Aorta (tissue), 5 donors: ENCODE measurements at regions of chr22 and their contacts with region 1.

Region 1: DNA sequence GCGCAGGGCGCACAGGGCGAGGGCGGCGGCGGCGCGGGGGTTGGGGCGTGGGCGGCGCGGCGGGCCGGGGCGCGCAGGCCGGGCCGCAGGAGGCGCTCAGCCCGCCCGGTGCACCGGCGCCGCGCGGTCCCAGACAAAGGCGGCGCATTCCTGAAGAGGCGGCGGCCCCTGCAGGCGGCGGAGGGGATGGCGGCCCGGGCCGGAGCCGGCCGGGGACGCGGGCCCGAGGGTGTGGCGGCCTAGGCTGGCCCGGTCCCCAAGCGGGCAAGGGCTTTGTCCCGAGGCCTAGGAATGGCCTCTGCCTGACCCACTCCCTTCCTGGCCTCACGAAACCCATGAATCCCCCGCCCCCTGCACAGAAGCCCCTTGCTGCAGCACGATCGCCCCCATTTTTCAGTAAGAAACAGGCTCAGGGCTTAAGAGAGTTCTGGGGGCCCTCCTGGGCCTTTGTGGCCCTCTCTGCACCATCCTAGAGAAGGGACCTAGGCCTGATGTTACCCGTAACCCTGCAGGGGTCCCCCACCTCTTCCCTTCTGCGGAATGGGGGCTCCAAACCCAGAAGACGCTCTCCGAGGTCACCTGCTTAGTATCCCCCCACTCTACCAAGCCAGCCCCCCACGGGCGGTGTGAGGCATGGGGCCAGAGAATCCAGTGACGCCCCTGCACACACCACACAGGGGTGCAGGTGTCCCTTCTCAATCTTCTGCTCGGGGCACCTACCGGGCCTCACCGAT is at the start of gene RTN4R:
- DNase-seq: peak; percentile 64 to 89
- ATAC-seq: peak; percentile 79
- H3K4me3 ChIP-seq: peak within 1 kb of the TSS; percentile 31 to 34
- H3K27ac ChIP-seq: no peak within 1 kb of the TSS
- H3K4me1 ChIP-seq: no peaks in the 10 kb centered on the region
- H3K27me3 ChIP-seq: no peaks in the 10 kb centered on the region
- total RNA-seq, gene RTN4R: 1.3 to 2.7 TPM

Region 2: DNA sequence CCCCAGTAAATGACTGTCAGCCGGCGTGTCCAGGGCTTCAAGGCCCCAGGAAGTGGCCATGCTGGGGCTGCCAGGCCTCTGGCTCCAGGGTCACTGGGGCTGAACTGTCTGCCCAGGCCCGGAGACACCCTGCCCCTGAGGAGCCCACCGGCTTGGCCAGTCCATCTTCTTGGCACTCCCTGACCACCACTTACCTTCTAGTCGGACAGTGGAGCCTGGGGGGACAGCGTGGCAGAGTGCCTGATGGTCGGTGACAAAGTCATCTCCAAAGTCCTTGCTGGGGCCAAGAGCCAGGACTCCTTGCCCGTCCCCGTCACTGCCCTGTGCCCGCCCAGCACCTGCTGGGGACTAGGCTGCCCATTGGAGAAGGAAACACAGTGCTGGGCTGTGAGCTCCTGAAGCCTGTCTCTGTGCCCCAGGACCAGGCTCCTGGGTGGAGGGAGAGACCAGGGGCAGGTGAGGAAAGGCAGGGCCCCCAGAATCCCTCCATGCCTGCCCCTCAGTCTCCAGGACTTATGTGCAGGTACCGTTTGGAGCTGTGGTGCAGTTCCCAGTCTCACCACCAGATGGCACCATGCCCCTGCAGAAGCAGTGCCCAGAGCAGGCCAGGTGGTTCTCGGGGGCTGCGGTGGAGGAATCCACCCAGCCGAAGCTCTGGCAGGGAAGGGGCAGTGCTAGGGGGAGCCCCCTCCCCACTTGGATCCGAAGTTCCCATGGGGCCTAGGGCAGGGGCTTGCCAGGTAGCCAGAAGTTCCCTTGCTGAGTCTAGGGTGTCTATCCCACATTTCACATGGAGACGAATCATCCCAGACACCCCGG is 111.6 kb before region 1 on chr22:
- intact Hi-C with region 1: loop called (anchors 2 to 5 kb)
- DNase-seq: peak; percentile 89 to 95
- ATAC-seq: peak; percentile 89
- H3K4me3 ChIP-seq: no peak overlapping the region
- H3K27ac ChIP-seq: no peak overlapping the region
- H3K4me1 ChIP-seq: no peaks in the 10 kb centered on the region
- H3K27me3 ChIP-seq: no peaks in the 10 kb centered on the region

Region 3: DNA sequence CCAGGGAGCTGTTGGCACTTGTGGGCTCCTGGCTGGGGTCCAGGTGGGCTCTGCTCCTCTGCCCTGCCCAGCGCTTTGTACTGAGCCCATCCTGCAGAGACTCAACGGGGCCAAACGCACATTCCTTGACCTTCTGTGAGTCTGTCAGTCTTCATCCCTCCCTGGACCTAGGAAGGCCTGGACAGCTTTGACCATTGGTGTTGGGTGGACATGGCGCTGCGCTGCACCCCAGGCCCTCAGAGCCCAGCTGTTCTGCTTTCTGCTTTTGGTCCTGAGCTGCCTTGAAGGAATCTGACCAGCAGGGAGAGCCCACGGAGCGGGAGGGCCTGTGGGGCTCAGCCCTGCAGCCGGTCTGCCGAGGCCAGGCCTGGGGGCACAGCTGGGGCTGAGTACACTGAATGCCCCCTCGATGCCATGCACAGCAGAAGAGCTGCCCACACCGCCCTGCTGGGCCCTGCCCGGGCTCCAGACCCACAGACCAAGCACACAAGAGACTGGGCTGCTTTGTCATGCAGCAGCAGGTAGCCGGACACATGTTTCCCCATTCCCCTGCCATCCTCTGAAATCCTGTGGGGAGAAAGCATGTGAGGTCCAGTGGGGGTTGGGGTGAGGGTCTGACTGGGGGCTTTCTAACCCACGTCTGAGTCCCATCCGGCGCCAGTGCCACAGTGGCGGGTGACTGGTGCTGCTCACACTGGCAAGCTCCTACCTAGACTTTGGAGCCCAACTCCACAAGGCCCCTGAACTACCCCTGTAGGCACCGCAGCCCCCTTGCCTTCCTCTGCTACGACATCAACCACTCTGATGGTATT is 93.5 kb before region 1 on chr22:
- intact Hi-C with region 1: loop called in 1 of 2 experiments (anchors 5 kb)
- DNase-seq: no peak
- ATAC-seq: no peak
- H3K4me3 ChIP-seq: no peak overlapping the region
- H3K27ac ChIP-seq: no peak overlapping the region
- H3K4me1 ChIP-seq: no peaks in the 10 kb centered on the region
- H3K27me3 ChIP-seq: no peaks in the 10 kb centered on the region

Region 4: GRCh38 chr22:20254975-20255946 is 13.2 kb before region 1 on chr22:
- intact Hi-C with region 1: no loop called
- DNase-seq: no peak
- ATAC-seq: no peak
- H3K4me3 ChIP-seq: no peak overlapping the region
- H3K27ac ChIP-seq: no peak overlapping the region
- H3K4me1 ChIP-seq: no peaks in the 10 kb centered on the region
- H3K27me3 ChIP-seq: no peaks in the 10 kb centered on the region

Region 5: GRCh38 chr22:20283674-20284066 is 15.2 kb after region 1 on chr22:
- intact Hi-C with region 1: loop called in 1 of 2 experiments (anchors 1 kb)
- DNase-seq: no peak
- ATAC-seq: no peak
- H3K4me3 ChIP-seq: no peak overlapping the region
- H3K27ac ChIP-seq: no peak overlapping the region
- H3K4me1 ChIP-seq: no peaks in the 10 kb centered on the region
- H3K27me3 ChIP-seq: no peaks in the 10 kb centered on the region